H1 (cell line): ENCODE measurements at regions of chr10 and their contacts with region 1.

Region 1: GRCh38 chr10:96229568-96230030 is 41.8 kb downstream of the BLNK start:
- DNase-seq: peak; percentile 61 to 86
- H3K4me3 ChIP-seq: no peak overlapping the region
- H3K27ac ChIP-seq: no peak overlapping the region
- H3K4me1 ChIP-seq: peaks cover 0 to 2% (median under 1%) of the 10 kb centered on the region in 4 experiments; a peak in 2 of 7 replicates
- H3K27me3 ChIP-seq: no peaks in the 10 kb centered on the region
- CTCF ChIP-seq: peak; percentile 94 to 99 (median 97)
- EP300 ChIP-seq: 0 out of 3 replicates have a peak, but pooled peaks of 1 of the 2 experiments have one; percentile 15
- POLR2A ChIP-seq: no peak
- RAD21 ChIP-seq: peak; percentile 90 to 92

Region 2: DNA sequence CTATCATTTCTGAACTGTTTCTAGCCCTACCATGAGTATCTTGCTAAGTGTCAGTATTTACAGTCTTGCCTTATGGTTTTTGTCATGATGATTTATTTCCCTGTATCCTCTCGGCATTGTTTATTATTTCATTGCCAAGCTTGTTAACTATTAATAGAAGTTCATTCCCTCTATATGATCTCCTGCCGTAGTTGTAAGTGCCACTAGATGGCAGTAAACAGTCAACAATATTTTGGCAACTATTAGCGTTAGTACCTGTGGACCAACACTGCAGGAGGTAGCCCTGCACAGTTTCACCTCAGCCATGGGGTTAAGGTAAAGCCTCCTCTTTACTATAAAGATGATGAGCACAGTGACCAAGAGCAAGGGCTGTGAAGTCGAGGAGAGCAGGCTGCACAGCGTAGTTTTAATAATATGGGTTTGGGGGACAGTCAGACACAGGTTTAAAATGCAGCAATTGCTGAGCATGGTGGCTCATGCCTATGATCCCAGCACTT is 212.4 kb before region 1 on chr10:
- CTCF ChIA-PET with region 1: interaction called, 18 read pairs
- POLR2A ChIA-PET with region 1: no interaction called
- DNase-seq: peak in 1 of 2 experiments; percentile 54
- H3K4me3 ChIP-seq: no peak overlapping the region
- H3K27ac ChIP-seq: no peak overlapping the region
- H3K4me1 ChIP-seq: no peaks in the 10 kb centered on the region
- H3K27me3 ChIP-seq: no peaks in the 10 kb centered on the region
- CTCF ChIP-seq: peak in 2 of 3 experiments; percentile 62 to 70; a peak in 3 of 4 replicates
- EP300 ChIP-seq: no peak
- POLR2A ChIP-seq: no peak
- RAD21 ChIP-seq: peak; percentile 83 to 86

Region 3: DNA sequence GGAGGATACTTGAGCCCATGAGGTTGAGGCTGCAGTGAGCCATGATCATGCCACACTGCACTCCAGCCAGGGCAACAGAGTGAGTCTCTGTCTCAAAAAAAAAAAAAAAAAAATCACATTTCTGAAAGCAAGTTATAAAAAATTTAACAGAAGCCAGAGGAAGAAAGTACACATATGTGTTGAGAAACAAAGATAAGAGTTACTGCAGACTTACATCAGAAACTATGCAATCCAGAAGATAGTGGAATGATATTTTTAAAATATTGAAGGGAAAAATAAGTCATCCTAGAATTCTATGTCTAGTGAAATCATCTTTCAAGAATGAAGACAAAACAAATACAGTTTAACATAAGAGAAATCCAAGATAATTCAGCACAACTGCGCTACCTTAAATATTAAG is 52.6 kb before region 1 on chr10:
- CTCF ChIA-PET with region 1: no interaction called
- POLR2A ChIA-PET with region 1: no interaction called
- DNase-seq: no peak
- H3K4me3 ChIP-seq: no peak overlapping the region
- H3K27ac ChIP-seq: no peak overlapping the region
- H3K4me1 ChIP-seq: no peaks in the 10 kb centered on the region
- H3K27me3 ChIP-seq: no peaks in the 10 kb centered on the region
- CTCF ChIP-seq: no peak
- EP300 ChIP-seq: no peak
- POLR2A ChIP-seq: no peak
- RAD21 ChIP-seq: no peak

Region 4: DNA sequence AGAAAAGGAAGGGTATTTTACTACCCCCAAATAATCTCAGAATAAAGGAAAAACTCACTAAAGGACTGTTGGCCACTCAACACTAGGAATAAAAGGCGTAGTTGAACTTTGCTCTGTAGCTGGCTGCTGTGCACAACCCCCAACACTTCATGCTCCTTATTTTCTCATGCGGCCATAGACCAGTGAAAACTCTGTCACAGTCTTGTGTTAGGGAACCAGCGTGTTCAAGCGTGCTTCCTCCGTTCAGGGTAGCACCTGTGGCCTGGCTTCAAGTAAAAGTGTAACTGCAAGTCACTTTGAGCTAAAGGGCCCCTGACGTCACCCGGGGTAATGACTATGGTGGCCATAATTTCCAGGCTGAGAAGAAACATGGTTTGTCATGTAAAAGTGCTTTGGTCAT is 14.8 kb after region 1 on chr10:
- CTCF ChIA-PET with region 1: interaction called, 35 read pairs
- POLR2A ChIA-PET with region 1: interaction called, 3 read pairs
- DNase-seq: no peak
- H3K4me3 ChIP-seq: no peak overlapping the region
- H3K27ac ChIP-seq: no peak overlapping the region
- H3K4me1 ChIP-seq: no peaks in the 10 kb centered on the region
- H3K27me3 ChIP-seq: no peaks in the 10 kb centered on the region
- CTCF ChIP-seq: no peak
- EP300 ChIP-seq: no peak
- POLR2A ChIP-seq: no peak
- RAD21 ChIP-seq: no peak

Region 5: GRCh38 chr10:96263669-96264068 is 34.1 kb after region 1 on chr10:
- CTCF ChIA-PET with region 1: interaction called, 13 read pairs
- POLR2A ChIA-PET with region 1: no interaction called
- DNase-seq: no peak
- H3K4me3 ChIP-seq: no peak overlapping the region
- H3K27ac ChIP-seq: no peak overlapping the region
- H3K4me1 ChIP-seq: peaks cover 0 to 4% (median 0%) of the 10 kb centered on the region in 4 experiments; a peak in 2 of 7 replicates
- H3K27me3 ChIP-seq: no peaks in the 10 kb centered on the region
- CTCF ChIP-seq: no peak
- EP300 ChIP-seq: no peak
- POLR2A ChIP-seq: no peak
- RAD21 ChIP-seq: no peak

Region 6: GRCh38 chr10:96287392-96288105 is 58.0 kb after region 1 on chr10:
- CTCF ChIA-PET with region 1: interaction called, 151 read pairs
- POLR2A ChIA-PET with region 1: no interaction called
- DNase-seq: no peak
- H3K4me3 ChIP-seq: no peak overlapping the region
- H3K27ac ChIP-seq: no peak overlapping the region
- H3K4me1 ChIP-seq: peaks cover 0 to 3% (median 0%) of the 10 kb centered on the region in 4 experiments; a peak in 2 of 7 replicates
- H3K27me3 ChIP-seq: peaks cover 0 to 2% (median 0%) of the 10 kb centered on the region in 4 experiments; a peak in 1 of 7 replicates
- CTCF ChIP-seq: no peak
- EP300 ChIP-seq: no peak
- POLR2A ChIP-seq: no peak
- RAD21 ChIP-seq: no peak

Region 7: GRCh38 chr10:96299383-96299782 is 69.8 kb after region 1 on chr10:
- CTCF ChIA-PET with region 1: interaction called, 151 read pairs
- POLR2A ChIA-PET with region 1: interaction called, 3 read pairs
- DNase-seq: no peak
- H3K4me3 ChIP-seq: no peak overlapping the region
- H3K27ac ChIP-seq: no peak overlapping the region
- H3K4me1 ChIP-seq: no peaks in the 10 kb centered on the region
- H3K27me3 ChIP-seq: no peaks in the 10 kb centered on the region; a peak in 2 of 7 replicates
- CTCF ChIP-seq: no peak
- EP300 ChIP-seq: no peak
- POLR2A ChIP-seq: no peak
- RAD21 ChIP-seq: no peak

Region 8: DNA sequence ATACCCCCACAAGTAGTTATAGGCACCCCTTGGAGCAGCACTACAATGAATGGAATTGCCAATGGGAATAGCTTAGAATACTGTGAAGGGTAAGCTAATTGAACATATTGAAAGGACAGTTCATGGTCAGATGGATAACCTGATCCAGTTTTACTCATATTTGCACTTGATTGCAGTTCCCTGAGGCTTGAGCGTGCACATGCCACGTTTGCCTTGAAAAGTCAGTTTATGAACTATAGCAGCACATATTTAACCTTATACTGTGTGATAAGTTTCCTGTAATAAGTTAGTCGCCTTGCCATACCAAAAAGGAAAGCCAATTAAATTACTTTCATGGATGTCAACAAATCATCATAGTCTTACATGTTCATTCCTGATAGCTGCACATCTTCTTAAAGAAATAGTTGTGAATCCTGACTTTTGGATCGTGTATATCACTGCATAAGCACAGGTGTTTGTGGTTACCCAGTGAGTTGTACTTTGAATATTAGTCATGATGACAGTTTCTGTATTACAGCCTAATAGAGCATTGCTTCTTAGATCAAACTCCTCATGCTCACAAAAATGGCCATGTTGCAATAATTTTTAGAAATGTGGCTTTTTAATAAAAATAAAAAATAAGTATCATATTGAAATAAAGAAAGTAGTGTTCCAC is 96.2 kb after region 1 on chr10:
- CTCF ChIA-PET with region 1: interaction called, 119 read pairs
- POLR2A ChIA-PET with region 1: interaction called, 3 read pairs
- DNase-seq: no peak
- H3K4me3 ChIP-seq: no peak overlapping the region
- H3K27ac ChIP-seq: no peak overlapping the region
- H3K4me1 ChIP-seq: no peaks in the 10 kb centered on the region
- H3K27me3 ChIP-seq: 0 out of 7 replicates have a peak, but pooled peaks cover 0 to 4% (median 0%) of the 10 kb centered on the region in 4 experiments
- CTCF ChIP-seq: no peak
- EP300 ChIP-seq: no peak
- POLR2A ChIP-seq: no peak
- RAD21 ChIP-seq: no peak